ENCODE measurements at regions of chr4 and their contacts with region 1.

Region 1: DNA sequence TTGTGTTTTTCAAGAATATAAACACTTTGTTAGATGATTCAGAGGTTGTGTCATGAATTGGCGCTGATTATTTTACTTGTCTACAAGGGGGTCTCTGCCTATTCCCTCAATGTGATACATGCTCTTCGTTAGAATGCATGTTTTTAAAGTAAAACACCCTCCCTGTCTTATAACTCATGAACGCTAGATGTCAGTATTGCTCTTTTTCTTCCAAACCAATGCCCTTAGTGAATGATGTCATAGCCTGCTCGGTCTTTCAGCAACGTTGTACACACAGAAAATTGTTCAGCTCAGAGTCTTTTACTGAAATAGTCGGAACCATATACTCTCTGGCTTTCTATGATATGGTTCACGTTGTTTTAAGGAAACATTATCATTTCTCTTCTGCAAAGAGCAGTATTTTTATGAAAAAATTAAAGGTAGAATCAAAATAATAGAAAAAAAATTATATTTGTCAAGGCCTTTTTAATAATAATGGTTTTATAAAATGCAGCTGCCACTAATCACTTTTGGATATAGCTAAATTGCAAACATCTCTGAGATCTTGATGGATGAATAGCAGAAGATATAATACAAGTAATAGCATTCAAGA is 292.9 kb downstream of the TLL1 start:
- ATAC-seq: peak; percentile 78 to 96 (median 86)
- H3K4me3 ChIP-seq: no peak overlapping the region
- H3K27ac ChIP-seq: no peak overlapping the region
- H3K4me1 ChIP-seq: peaks cover 0 to 9% of the 10 kb centered on the region in 2 donors

Region 2: GRCh38 chr4:166594326-166594946 is 428.5 kb after region 1 on chr4:
- in situ Hi-C with region 1: loop called in 1 of 9 experiments (anchors 25 kb)
- ATAC-seq: peak in 6 of 8 experiments; percentile 43 to 98 (median 71)
- H3K4me3 ChIP-seq: no peak overlapping the region
- H3K27ac ChIP-seq: no peak overlapping the region
- H3K4me1 ChIP-seq: no peaks in the 10 kb centered on the region

Region 3: GRCh38 chr4:166688835-166689234 is 522.9 kb after region 1 on chr4:
- in situ Hi-C with region 1: no loop called
- ATAC-seq: no peak
- H3K4me3 ChIP-seq: no peak overlapping the region
- H3K27ac ChIP-seq: no peak overlapping the region
- H3K4me1 ChIP-seq: no peaks in the 10 kb centered on the region

Region 4: DNA sequence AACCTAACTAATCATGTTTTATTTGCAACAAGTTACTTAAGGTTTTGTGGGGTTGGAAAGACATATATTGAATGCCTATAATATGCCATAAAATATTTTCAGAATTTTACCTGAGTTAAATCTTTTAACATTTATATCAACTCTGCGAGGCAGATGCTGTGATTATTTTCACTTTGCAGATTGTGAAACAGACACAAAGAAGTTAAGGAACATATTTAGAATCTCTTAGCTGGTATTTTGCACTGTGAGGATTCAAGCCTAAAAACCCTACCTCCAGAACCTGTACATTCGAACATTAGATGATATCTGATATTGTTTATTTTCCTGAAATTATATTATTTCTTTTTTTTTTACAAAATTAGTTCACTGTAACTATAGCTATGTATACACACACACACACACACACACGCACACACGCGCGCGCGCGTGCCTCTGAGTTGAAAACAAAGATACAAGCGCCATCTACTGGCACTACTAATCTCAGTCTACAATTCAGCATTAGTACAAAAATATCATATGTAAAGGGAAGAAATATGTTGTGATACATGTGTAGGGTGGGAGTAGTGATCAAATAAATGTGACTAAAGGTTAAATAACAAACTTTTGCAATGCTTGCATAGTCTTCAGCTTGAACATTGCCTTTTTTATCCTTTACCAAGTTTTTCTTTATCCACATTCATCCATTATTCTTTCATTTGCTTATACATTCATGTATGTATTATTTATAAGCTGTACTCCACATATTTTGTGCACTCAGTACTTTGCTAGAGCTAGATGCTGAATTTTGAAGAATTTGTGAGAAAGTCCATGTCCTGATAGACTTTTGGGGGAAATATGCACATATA is 1987.9 kb after region 1 on chr4:
- in situ Hi-C with region 1: loop called in 1 of 9 experiments (anchors 25 kb)
- ATAC-seq: peak; percentile 50 to 82 (median 74)
- H3K4me3 ChIP-seq: no peak overlapping the region
- H3K27ac ChIP-seq: no peak overlapping the region
- H3K4me1 ChIP-seq: peaks cover 0 to 7% of the 10 kb centered on the region in 2 donors

Measured in motor neuron (in vitro differentiated cells).